A549 (cell line): ENCODE measurements at regions of chr14 and their contacts with region 1.

Region 1: DNA sequence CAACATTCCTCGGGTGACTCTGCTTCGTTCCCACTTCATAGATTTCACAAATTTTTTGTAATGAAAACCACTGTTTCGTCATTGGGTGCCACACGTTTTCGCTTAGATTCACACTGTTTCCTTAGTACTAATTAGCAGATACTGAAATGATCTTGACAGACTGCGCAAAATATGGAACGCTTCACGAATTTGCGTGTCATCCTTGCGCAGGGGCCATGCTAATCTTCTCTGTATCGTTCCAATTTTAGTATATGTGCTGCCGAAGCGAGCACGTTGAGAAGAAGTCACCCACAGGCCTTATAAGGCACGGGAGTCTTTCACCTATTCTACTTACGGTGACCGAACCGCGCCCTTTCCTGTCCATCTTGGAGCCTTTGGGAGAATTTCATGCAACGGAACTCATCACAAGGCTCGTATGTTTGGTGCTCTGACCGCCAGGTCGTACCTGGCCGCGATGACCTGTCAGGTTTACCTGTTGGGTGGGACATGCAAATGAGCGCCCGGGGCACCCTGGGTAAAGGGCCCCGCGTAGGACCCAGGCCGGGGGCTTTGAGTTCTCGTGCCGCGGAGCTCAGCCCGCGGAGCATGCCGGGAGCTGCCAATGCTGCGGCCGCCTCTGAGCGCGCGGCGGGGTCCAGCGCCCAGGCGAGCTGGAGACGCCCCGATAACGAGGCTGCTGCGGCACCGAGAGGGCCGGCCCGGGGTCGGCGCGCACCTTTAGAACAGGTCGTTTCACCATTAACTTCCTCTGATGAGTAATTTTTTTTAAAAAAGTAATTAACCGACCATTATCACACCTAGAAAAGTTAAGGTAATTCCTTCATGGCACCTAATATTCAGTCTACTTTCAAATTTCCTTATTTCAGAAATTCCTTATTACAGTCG is at the start of gene RNU6-8:
- DNase-seq: peak; percentile 62 to 92
- ATAC-seq: peak; percentile 80 to 88
- H3K4me3 ChIP-seq: peak within 1 kb of the TSS; percentile 60
- H3K27ac ChIP-seq: peak within 1 kb of the TSS; percentile 82 to 91
- H3K4me1 ChIP-seq: peaks cover 11% of the 10 kb centered on the region; the same call in 1 of the 3 replicates
- CTCF ChIP-seq: no peak
- EP300 ChIP-seq: no peak
- POLR2A ChIP-seq: peak; percentile 65
- RAD21 ChIP-seq: no peak; a peak in 1 of 5 replicates
- polyA plus RNA-seq, gene RNU6-8: not detected in 2 replicates

Region 2: DNA sequence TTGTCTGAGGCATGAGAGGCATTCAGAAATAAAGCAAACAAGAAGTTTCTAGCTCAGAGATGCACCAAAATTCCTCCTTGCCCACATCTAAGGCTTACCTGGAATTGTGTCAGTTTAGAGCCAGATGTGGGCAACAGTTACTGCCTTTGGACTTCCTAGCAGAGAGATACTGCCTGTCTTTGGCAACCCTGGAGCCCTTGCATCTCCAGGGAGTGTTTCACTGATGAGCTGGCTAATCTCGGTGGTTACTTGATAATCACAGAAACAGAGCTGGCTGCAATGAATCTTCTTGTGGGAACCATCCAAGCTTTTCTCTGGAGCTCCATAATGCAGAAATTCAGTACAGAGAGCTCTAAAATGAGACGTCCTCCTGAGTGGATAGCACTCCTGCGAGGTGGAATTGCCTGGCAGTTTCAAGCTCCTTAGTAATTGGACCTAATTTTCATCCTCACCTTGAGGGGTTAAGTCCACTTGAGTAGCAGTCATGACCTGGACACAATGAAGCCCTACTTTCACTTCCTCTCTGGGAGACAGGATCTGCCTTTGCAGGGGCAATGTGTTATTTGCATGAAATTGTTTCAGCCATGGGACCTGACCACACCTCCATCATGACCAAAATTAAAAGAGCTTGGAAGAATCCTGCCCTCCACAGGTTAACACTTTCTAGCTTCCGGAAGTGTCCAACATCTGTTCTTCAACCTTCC is 235.0 kb before region 1 on chr14:
- CTCF ChIA-PET with region 1: no interaction called
- POLR2A ChIA-PET with region 1: no interaction called
- DNase-seq: no peak
- ATAC-seq: peak; percentile 60 to 65; a peak in 4 of 6 replicates
- H3K4me3 ChIP-seq: no peak overlapping the region
- H3K27ac ChIP-seq: peak overlapping the region; percentile 77 to 78
- H3K4me1 ChIP-seq: peaks cover 49% of the 10 kb centered on the region
- CTCF ChIP-seq: no peak
- EP300 ChIP-seq: no peak
- POLR2A ChIP-seq: no peak
- RAD21 ChIP-seq: no peak

Region 3: GRCh38 chr14:32224737-32225377 is 21.6 kb after region 1 on chr14:
- CTCF ChIA-PET with region 1: interaction called, 11 read pairs
- POLR2A ChIA-PET with region 1: interaction called, 4 read pairs
- DNase-seq: peak; percentile 52 to 68
- ATAC-seq: peak; percentile 98
- H3K4me3 ChIP-seq: no peak overlapping the region
- H3K27ac ChIP-seq: peak overlapping the region; percentile 52 to 73; a peak in 5 of 6 replicates
- H3K4me1 ChIP-seq: peaks cover 20% of the 10 kb centered on the region
- CTCF ChIP-seq: 0 out of 3 replicates have a peak, but pooled peaks have one; percentile 14
- EP300 ChIP-seq: no peak
- POLR2A ChIP-seq: no peak
- RAD21 ChIP-seq: peak in 1 of 2 experiments; percentile 11; a peak in 1 of 5 replicates

Region 4: GRCh38 chr14:32350020-32350419 is 146.8 kb after region 1 on chr14:
- CTCF ChIA-PET with region 1: no interaction called
- POLR2A ChIA-PET with region 1: no interaction called
- DNase-seq: no peak
- ATAC-seq: no peak
- H3K4me3 ChIP-seq: no peak overlapping the region
- H3K27ac ChIP-seq: no peak overlapping the region
- H3K4me1 ChIP-seq: peaks cover 6% of the 10 kb centered on the region; the same call in 1 of the 3 replicates
- CTCF ChIP-seq: no peak
- EP300 ChIP-seq: no peak
- POLR2A ChIP-seq: no peak
- RAD21 ChIP-seq: no peak